Activated CD4-positive, alpha-beta T cell treated with anti-CD3 and anti-CD28 coated beads for 36 hours (primary cell): ENCODE measurements at regions of chr3 and their contacts with region 1.

Region 1: DNA sequence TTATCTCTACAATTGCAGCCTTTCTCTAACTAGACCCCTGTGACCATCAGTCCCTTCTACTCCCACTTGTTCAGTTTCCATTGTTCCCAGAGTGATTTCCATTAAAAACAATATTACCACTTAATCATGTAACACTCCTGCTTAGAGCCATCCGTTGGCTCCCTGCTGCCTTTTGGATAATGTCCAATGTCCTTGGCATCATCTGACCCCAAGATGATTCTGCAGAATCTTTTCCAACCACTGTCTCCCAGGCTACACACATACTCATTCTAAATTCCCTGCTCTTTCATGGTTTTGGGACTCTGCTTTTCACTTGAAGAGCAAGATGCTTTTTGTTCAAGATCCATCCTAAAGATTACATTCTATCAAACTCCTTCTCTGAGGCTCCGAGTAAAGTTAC is 7.1 kb downstream of the KCNH8 start:
- DNase-seq: no peak
- ATAC-seq: no peak
- H3K4me3 Mint-ChIP-seq: no peak overlapping the region
- H3K27ac Mint-ChIP-seq: no peak overlapping the region
- H3K4me1 Mint-ChIP-seq: no peaks in the 10 kb centered on the region
- H3K27me3 Mint-ChIP-seq: peaks cover 12% of the 10 kb centered on the region

Region 2: GRCh38 chr3:19190602-19191001 is 35.2 kb after region 1 on chr3:
- CTCF ChIA-PET with region 1: no interaction called
- POLR2A ChIA-PET with region 1: no interaction called
- intact Hi-C with region 1: loop called in 1 of 2 experiments (anchors 1 kb)
- DNase-seq: no peak
- ATAC-seq: peak; percentile 74
- H3K4me3 Mint-ChIP-seq: no peak overlapping the region
- H3K27ac Mint-ChIP-seq: no peak overlapping the region
- H3K4me1 Mint-ChIP-seq: peaks cover 3% of the 10 kb centered on the region
- H3K27me3 Mint-ChIP-seq: peaks cover 2% of the 10 kb centered on the region

Region 3: DNA sequence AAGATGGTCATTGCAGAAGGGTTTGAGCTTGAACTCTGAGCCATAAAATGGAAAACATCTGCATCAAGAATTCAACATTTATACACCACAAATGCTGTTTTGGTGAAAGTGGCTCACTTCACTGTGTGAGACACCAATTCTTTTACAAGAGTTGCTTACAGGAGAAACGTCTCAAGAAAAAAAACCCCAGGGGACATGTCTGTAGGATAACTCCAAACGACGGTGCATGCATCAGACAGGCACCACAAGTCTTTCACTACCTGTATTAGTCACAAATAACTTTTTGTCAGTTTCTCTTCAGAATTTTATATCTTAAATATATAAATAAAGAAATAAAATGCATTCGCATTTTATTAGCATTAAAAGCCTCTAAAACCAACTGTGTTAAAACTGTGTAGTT is 614.3 kb after region 1 on chr3:
- CTCF ChIA-PET with region 1: no interaction called
- POLR2A ChIA-PET with region 1: no interaction called
- intact Hi-C with region 1: no loop called
- DNase-seq: no peak
- ATAC-seq: no peak
- H3K4me3 Mint-ChIP-seq: no peak overlapping the region
- H3K27ac Mint-ChIP-seq: no peak overlapping the region
- H3K4me1 Mint-ChIP-seq: no peaks in the 10 kb centered on the region
- H3K27me3 Mint-ChIP-seq: no peaks in the 10 kb centered on the region